CD4-positive, alpha-beta T cell (primary cell): ENCODE measurements at regions of chr13 and their contacts with region 1.

Region 1: DNA sequence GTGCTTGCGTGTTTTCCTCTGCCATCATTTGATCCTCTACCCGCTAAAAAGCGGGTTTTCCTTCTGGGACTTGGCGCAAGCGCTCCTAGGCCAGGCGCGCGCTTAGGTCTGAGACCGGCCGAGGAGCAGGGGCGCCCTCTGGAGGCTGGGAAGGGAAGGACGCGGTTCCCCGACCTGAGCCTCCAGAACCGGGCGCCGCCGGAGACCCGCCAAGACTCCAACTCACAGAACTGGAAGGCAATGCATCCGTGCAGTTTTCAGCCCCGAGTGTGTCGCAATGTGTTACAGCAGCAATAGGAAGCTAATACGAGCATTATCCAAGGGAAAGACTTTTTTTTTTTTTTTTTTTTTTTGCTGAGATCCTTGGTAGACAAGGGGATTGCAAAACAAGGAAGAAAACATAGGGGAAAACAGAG is 190.9 kb downstream of the COL4A1 start:
- DNase-seq: peak in 12 of 14 experiments; percentile 8 to 64 (median 26)
- ATAC-seq: no peak
- H3K4me3 ChIP-seq: no peak overlapping the region
- H3K4me3 Mint-ChIP-seq: no peak overlapping the region
- H3K27ac ChIP-seq: no peak overlapping the region
- H3K27ac Mint-ChIP-seq: no peak overlapping the region
- H3K4me1 ChIP-seq: peaks cover 3% of the 10 kb centered on the region
- H3K4me1 Mint-ChIP-seq: no peaks in the 10 kb centered on the region
- H3K27me3 ChIP-seq: peaks cover 16 to 28% of the 10 kb centered on the region in 2 experiments
- H3K27me3 Mint-ChIP-seq: peaks cover 39% of the 10 kb centered on the region
- CTCF ChIP-seq: peak; percentile 52

Region 2: DNA sequence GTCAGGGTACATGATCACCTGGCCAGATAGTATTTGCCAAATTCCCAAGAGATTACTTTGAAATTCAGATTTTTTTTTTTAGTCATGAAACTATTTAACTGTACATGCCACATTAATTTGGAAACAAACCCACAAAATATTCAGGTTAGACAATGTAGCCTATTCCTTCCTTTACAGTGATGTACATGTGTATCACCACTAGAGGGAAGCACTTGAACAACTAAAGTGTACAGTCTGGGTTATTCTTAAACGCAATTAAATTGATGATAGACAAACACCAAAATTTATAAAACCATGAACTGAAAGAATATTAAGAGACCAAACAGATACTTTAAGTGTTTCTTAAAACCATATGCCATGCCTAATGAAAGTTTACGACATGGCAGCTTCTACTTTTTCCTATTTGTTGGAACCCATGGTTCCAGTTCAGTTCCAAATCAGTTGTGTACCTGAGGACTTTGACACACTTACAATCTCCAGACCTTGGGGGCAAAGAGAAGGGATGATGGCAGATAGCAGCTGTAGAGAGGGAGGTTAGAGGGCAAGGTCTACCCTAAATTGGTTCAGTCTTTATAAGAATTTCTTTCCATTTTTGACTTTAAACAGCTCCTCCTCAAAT is 1793.8 kb before region 1 on chr13:
- CTCF ChIA-PET with region 1: no interaction called
- POLR2A ChIA-PET with region 1: no interaction called
- intact Hi-C with region 1: loop called in 1 of 2 experiments (anchors 10 kb)
- DNase-seq: peak in 3 of 14 experiments; percentile 65 to 68 (median 67)
- ATAC-seq: peak; percentile 77
- H3K4me3 ChIP-seq: no peak overlapping the region
- H3K4me3 Mint-ChIP-seq: no peak overlapping the region
- H3K27ac ChIP-seq: no peak overlapping the region
- H3K27ac Mint-ChIP-seq: no peak overlapping the region
- H3K4me1 ChIP-seq: peaks cover 9% of the 10 kb centered on the region
- H3K4me1 Mint-ChIP-seq: peaks cover 17% of the 10 kb centered on the region
- H3K27me3 ChIP-seq: no peaks in the 10 kb centered on the region
- H3K27me3 Mint-ChIP-seq: peaks cover 11% of the 10 kb centered on the region
- CTCF ChIP-seq: peak; percentile 85

Region 3: DNA sequence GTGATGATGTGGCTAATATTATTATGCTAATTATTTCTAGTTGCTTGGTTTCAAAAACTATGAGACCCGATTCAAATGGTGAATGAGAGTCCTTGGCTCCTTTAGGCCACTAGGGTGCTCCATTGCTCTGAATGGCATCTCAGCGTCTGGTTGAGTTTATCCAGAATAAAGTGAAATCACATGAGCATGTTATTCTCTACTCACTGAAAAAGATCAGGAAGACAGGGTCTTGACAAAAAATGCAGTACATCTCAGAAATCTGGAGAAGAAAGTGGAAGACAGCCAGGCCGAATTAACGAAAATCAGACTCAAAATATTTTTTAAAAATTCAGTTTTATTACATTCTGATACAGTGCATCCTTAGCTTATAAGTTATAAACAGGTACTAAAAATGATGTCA is 970.4 kb before region 1 on chr13:
- CTCF ChIA-PET with region 1: no interaction called
- POLR2A ChIA-PET with region 1: no interaction called
- intact Hi-C with region 1: loop called (anchors 10 kb)
- DNase-seq: peak in 3 of 14 experiments; percentile 9 to 32 (median 31)
- ATAC-seq: no peak
- H3K4me3 ChIP-seq: no peak overlapping the region
- H3K4me3 Mint-ChIP-seq: no peak overlapping the region
- H3K27ac ChIP-seq: no peak overlapping the region
- H3K27ac Mint-ChIP-seq: no peak overlapping the region
- H3K4me1 ChIP-seq: no peaks in the 10 kb centered on the region
- H3K4me1 Mint-ChIP-seq: no peaks in the 10 kb centered on the region
- H3K27me3 ChIP-seq: peaks cover 7 to 10% of the 10 kb centered on the region in 2 experiments
- H3K27me3 Mint-ChIP-seq: peaks cover 30% of the 10 kb centered on the region
- CTCF ChIP-seq: peak; percentile 29

Region 4: DNA sequence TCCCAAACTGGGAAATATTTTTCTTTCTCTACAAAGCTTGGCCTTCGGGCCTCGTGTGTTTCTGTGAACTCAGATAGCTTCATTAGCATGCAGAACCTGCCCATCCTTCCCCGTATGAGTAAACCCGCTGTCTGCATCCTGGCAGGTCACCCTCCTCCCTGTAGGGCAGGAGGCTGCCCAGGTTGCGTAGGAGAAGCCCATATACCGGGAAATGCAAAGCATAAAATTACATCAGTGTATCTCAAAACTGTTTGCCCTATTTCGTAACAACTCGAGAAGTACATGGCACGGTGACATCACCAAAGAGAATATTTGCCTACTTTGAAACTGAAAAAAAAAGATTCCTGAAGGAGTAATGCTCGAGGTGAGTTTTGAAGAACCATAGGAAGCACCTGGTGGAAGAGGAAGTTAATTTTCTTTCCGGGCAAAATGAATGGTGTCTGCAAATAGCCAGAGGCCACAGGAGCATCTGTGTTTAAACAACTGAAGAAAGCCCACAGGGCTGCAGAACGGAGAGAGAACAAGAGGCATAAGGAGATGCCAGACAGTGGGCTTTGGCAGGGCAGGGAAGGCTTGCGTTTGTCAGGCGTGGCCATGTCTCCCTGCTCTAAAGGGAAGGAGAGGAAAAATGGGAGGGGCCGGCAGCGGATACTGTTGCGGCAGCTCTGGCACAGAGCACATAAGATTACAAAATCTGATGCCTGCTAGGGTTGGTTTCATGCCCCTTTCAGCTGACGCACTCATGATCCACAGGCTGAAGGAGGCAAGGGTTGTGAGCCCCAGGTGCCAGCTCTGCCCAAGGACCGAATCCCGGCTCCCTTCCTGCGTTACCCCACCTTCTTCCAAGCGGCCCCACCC is 411.1 kb before region 1 on chr13:
- CTCF ChIA-PET with region 1: no interaction called
- POLR2A ChIA-PET with region 1: no interaction called
- intact Hi-C with region 1: no loop called
- DNase-seq: peak in 2 of 14 experiments; percentile 20 to 23
- ATAC-seq: no peak
- H3K4me3 ChIP-seq: no peak overlapping the region
- H3K4me3 Mint-ChIP-seq: no peak overlapping the region
- H3K27ac ChIP-seq: no peak overlapping the region
- H3K27ac Mint-ChIP-seq: no peak overlapping the region
- H3K4me1 ChIP-seq: peaks cover 13% of the 10 kb centered on the region
- H3K4me1 Mint-ChIP-seq: peaks cover 14% of the 10 kb centered on the region
- H3K27me3 ChIP-seq: peaks cover 11 to 21% of the 10 kb centered on the region in 2 experiments
- H3K27me3 Mint-ChIP-seq: peaks cover 38% of the 10 kb centered on the region
- CTCF ChIP-seq: no peak

Region 5: DNA sequence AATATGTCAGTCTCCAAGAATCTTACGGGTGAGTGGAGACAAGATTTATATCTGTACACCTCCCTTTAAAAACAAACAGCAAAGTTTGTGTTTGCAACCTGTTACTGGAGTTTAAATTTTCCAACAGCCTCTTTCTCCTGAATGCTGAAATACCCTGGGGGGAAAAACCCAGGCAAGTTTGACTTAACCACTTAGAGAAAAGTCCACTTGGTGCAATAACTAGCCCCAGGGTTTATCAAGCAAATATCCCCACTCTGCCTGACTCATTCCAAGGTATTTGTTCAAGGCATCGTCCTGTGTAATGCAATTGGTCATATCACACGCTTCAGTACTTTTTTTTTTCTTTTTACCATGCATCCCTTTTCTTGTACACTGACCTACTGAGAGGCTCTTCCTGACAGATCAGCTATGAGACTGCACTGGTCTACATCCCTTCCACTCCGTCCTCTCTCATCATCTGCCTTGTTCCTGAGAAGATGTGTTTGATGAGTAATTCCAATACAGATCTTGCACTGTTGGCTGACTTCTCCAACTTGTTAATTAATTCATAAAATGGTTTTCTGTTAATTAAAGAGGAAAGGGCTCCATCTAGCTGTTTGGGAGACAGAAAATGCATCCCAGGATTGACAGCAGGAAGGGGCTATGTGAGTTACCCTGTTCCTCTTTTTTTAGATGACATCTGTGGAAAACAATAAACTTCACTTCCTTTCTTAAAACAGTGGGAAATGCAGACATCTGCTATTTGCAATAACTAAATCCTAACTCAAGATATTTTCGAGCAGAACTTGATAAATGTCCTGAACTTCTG is 117.2 kb before region 1 on chr13:
- CTCF ChIA-PET with region 1: no interaction called
- POLR2A ChIA-PET with region 1: no interaction called
- intact Hi-C with region 1: no loop called
- DNase-seq: no peak
- ATAC-seq: no peak
- H3K4me3 ChIP-seq: no peak overlapping the region
- H3K4me3 Mint-ChIP-seq: no peak overlapping the region
- H3K27ac ChIP-seq: no peak overlapping the region
- H3K27ac Mint-ChIP-seq: no peak overlapping the region
- H3K4me1 ChIP-seq: no peaks in the 10 kb centered on the region
- H3K4me1 Mint-ChIP-seq: no peaks in the 10 kb centered on the region
- H3K27me3 ChIP-seq: no peaks in the 10 kb centered on the region
- H3K27me3 Mint-ChIP-seq: peaks cover 5% of the 10 kb centered on the region
- CTCF ChIP-seq: no peak

Region 6: DNA sequence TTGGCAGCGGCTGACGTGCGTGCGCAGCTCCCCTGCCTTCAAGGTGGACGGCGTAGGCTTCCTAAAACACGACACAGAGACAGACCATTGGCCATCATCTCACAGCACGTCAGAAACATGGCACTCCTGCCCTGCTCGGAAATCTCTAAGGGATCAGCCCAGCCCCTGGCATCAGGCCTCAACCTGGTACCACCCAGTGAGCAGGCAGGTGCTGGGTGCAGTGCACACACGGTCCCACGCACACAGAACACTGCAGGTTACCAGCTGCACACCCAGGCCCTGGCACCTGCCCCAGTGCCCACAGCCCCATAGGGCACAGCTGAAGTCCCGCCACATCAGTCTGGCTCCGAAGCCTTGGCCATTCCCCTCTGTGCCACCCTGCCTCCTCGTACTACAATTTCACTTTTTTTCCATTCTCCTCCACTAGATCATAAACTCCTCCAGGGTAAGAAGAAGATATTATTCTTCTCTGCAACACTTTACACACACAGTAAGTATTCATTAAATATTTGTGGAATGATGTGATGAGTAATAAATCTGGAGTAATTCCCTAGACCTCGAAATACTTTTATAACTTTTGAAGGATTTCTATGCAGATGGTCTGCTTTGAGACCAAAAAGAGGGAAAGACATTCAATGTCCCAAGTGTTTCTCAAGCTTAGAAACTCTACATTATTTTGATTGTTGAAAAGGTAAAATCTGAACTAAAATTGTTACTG is 34.5 kb after region 1 on chr13:
- CTCF ChIA-PET with region 1: no interaction called
- POLR2A ChIA-PET with region 1: no interaction called
- intact Hi-C with region 1: no loop called
- DNase-seq: no peak
- ATAC-seq: no peak
- H3K4me3 ChIP-seq: no peak overlapping the region
- H3K4me3 Mint-ChIP-seq: no peak overlapping the region
- H3K27ac ChIP-seq: no peak overlapping the region
- H3K27ac Mint-ChIP-seq: no peak overlapping the region
- H3K4me1 ChIP-seq: no peaks in the 10 kb centered on the region
- H3K4me1 Mint-ChIP-seq: no peaks in the 10 kb centered on the region
- H3K27me3 ChIP-seq: no peaks in the 10 kb centered on the region
- H3K27me3 Mint-ChIP-seq: no peaks in the 10 kb centered on the region
- CTCF ChIP-seq: no peak

Region 7: DNA sequence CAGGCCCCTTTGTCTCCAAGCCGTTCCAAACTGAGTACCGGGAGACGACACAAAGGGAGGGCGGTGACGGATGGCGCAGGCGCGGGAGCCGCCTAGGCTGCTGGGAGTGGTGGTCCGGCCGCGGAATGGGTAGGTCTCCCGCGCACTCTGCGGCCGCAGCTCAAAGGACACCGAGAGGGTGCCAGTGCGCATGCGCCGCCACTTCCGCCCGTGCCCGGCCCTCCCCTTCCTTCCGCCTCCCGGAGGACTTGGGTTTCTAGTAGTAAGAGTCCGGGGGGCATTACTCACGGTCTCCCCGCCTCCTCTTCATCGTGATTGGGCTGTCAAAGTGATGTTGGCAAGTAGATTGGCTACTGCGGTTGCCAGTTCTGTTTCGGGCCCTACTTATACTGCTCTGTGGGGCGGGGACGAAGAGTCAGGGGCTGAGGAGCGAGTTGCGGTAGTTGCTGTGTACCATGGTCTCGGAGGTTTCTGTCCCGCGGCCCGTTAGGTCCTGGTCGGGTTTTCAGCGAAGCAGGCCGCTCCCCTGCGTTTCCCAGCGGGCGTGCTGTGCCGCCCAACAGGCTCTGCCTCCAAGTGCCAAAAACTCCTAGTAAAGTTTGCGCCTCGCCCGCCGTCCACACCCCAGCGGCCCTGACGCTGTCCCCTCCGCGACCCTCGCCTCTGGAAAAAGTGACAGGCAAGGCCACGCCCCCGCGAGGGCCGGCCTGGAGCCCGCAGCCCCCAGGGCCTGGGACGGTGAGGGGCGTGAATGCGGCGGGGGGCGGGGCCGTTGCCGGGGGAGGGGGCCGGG is 597.0 kb after region 1 on chr13:
- CTCF ChIA-PET with region 1: no interaction called
- POLR2A ChIA-PET with region 1: no interaction called
- intact Hi-C with region 1: no loop called
- DNase-seq: peak; percentile 98 to 100 (median 99)
- ATAC-seq: peak; percentile 64
- H3K4me3 ChIP-seq: peak overlapping the region; percentile 96
- H3K4me3 Mint-ChIP-seq: peak overlapping the region; percentile 98
- H3K27ac ChIP-seq: peak overlapping the region; percentile 97 to 99
- H3K27ac Mint-ChIP-seq: peak overlapping the region; percentile 97
- H3K4me1 ChIP-seq: peaks cover 30% of the 10 kb centered on the region
- H3K4me1 Mint-ChIP-seq: peaks cover 29% of the 10 kb centered on the region
- H3K27me3 ChIP-seq: no peaks in the 10 kb centered on the region
- H3K27me3 Mint-ChIP-seq: peaks cover 4% of the 10 kb centered on the region
- CTCF ChIP-seq: no peak